PC-9 (cell line): ENCODE measurements at regions of chr10 and their contacts with region 1.

Region 1: DNA sequence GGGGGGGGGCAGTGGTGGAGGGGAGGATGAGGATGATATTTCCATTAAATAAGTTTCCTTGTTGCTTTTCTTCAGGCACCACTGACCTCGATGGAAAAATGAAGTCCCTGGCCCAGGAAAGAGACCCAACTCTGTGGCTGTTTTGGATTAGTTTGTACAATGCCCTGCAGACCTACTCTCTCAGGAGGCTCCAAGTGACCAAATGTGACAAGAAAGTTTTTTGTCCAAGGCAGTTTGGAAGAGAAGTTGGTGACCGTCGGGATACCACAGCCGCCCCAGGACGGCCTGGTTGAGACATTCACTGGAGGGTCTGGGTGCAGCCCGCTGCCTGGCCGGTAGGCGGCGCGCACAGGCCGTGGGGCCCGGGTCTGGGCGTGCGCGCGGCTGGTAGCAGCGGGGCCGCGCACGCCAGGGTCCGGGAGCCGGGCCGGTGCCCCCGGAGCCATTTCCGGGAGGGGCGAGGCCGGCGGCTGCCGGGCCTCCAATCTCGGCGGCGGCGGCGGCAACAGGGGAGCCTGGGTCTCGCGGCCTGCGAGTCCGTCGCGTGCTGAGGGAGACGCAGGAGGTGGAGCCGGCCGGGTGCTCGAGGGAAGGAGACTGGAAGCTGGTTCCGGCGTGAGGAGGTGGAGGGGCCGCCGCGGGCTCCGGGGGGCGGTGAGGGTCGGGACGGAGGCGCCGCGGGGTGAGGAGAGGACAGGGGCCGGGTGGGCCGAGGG is at the start of gene SGPL1:
- DNase-seq: peak; percentile 68 to 91
- H3K4me3 ChIP-seq: peak within 1 kb of the TSS; percentile 68
- H3K27ac ChIP-seq: peak within 1 kb of the TSS; percentile 89
- H3K4me1 ChIP-seq: peaks cover 45% of the 10 kb centered on the region
- H3K27me3 ChIP-seq: no peaks in the 10 kb centered on the region
- CTCF ChIP-seq: peak; percentile 84
- total RNA-seq, gene SGPL1: 96.9 and 141 TPM in 2 replicates

Region 2: GRCh38 chr10:70461215-70461986 is 354.3 kb before region 1 on chr10:
- CTCF ChIA-PET with region 1: interaction called, 3 read pairs
- POLR2A ChIA-PET with region 1: no interaction called
- intact Hi-C with region 1: loop called (anchors 5 kb)
- DNase-seq: peak in 1 of 2 experiments; percentile 64
- H3K4me3 ChIP-seq: no peak overlapping the region
- H3K27ac ChIP-seq: no peak overlapping the region
- H3K4me1 ChIP-seq: peaks cover 14% of the 10 kb centered on the region; the same call in 1 of the 2 replicates
- H3K27me3 ChIP-seq: peaks cover 17% of the 10 kb centered on the region; the same call in 1 of the 2 replicates
- CTCF ChIP-seq: peak; percentile 95

Region 3: GRCh38 chr10:70722820-70723424 is 92.7 kb before region 1 on chr10:
- CTCF ChIA-PET with region 1: no interaction called
- POLR2A ChIA-PET with region 1: no interaction called
- intact Hi-C with region 1: no loop called
- DNase-seq: peak; percentile 40 to 93
- H3K4me3 ChIP-seq: no peak overlapping the region
- H3K27ac ChIP-seq: peak overlapping the region; percentile 80
- H3K4me1 ChIP-seq: peaks cover 26% of the 10 kb centered on the region
- H3K27me3 ChIP-seq: no peaks in the 10 kb centered on the region
- CTCF ChIP-seq: no peak

Region 4: GRCh38 chr10:70866424-70866823 is 50.8 kb after region 1 on chr10:
- CTCF ChIA-PET with region 1: no interaction called
- POLR2A ChIA-PET with region 1: no interaction called
- intact Hi-C with region 1: loop called (anchors 1 kb)
- DNase-seq: peak; percentile 69 to 96
- H3K4me3 ChIP-seq: peak overlapping the region; percentile 39; the same call in 1 of the 2 replicates
- H3K27ac ChIP-seq: peak overlapping the region; percentile 88
- H3K4me1 ChIP-seq: peaks cover 48% of the 10 kb centered on the region
- H3K27me3 ChIP-seq: no peaks in the 10 kb centered on the region
- CTCF ChIP-seq: no peak

Region 5: DNA sequence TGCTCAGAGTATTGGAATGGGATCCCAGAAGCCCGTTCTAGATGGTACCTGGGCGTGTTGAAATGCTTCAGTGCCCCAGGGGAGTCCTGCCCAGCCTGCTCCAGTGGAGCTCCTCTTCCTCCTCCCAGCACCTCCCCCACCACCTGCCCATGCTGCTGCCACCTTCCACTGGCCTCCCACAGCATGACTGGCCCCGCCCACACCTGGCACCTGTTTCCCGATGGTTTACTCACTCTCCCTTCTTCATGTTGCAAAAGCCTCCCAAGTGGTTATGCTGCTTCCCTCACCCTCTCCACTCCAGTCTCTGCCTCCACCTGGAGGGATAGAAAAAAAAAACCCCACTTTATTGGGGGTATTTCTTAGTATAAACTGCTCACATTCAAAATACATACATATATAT is 104.9 kb after region 1 on chr10:
- CTCF ChIA-PET with region 1: no interaction called
- POLR2A ChIA-PET with region 1: no interaction called
- intact Hi-C with region 1: loop called (anchors 1 kb)
- DNase-seq: peak; percentile 87 to 93
- H3K4me3 ChIP-seq: no peak overlapping the region
- H3K27ac ChIP-seq: no peak overlapping the region
- H3K4me1 ChIP-seq: peaks cover 27% of the 10 kb centered on the region
- H3K27me3 ChIP-seq: peaks cover 27% of the 10 kb centered on the region
- CTCF ChIP-seq: 0 out of 2 replicates have a peak, but pooled peaks have one; percentile 20

Region 6: DNA sequence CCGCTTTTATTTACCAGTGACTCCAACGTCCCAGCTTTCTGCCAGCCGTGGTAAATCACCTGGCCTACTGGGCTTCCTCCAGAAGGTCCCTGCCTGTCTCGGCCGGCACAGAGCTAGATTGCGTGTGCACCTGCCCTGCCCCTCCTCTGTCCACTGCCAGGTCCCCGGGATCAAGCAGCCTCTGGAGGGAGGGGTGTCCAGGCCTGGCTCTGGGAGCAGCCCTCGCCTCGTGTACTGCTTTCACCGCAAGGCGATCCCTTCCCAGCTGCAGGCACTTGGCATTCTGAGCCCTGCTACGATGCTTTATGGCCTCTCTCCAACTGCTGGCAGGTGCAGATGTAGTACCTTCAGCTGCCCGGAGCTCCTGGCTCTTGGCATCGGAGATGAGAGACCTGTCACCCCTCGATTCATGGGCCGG is 510.8 kb after region 1 on chr10:
- CTCF ChIA-PET with region 1: no interaction called
- POLR2A ChIA-PET with region 1: no interaction called
- intact Hi-C with region 1: no loop called
- DNase-seq: no peak
- H3K4me3 ChIP-seq: no peak overlapping the region
- H3K27ac ChIP-seq: no peak overlapping the region
- H3K4me1 ChIP-seq: 0 out of 2 replicates have a peak, but pooled peaks cover 3% of the 10 kb centered on the region
- H3K27me3 ChIP-seq: no peaks in the 10 kb centered on the region
- CTCF ChIP-seq: no peak

Region 7: GRCh38 chr10:71659111-71659634 is 843.5 kb after region 1 on chr10:
- CTCF ChIA-PET with region 1: interaction called, 14 read pairs
- POLR2A ChIA-PET with region 1: no interaction called
- intact Hi-C with region 1: no loop called
- DNase-seq: no peak
- H3K4me3 ChIP-seq: no peak overlapping the region
- H3K27ac ChIP-seq: no peak overlapping the region
- H3K4me1 ChIP-seq: no peaks in the 10 kb centered on the region
- H3K27me3 ChIP-seq: no peaks in the 10 kb centered on the region
- CTCF ChIP-seq: no peak

Region 8: DNA sequence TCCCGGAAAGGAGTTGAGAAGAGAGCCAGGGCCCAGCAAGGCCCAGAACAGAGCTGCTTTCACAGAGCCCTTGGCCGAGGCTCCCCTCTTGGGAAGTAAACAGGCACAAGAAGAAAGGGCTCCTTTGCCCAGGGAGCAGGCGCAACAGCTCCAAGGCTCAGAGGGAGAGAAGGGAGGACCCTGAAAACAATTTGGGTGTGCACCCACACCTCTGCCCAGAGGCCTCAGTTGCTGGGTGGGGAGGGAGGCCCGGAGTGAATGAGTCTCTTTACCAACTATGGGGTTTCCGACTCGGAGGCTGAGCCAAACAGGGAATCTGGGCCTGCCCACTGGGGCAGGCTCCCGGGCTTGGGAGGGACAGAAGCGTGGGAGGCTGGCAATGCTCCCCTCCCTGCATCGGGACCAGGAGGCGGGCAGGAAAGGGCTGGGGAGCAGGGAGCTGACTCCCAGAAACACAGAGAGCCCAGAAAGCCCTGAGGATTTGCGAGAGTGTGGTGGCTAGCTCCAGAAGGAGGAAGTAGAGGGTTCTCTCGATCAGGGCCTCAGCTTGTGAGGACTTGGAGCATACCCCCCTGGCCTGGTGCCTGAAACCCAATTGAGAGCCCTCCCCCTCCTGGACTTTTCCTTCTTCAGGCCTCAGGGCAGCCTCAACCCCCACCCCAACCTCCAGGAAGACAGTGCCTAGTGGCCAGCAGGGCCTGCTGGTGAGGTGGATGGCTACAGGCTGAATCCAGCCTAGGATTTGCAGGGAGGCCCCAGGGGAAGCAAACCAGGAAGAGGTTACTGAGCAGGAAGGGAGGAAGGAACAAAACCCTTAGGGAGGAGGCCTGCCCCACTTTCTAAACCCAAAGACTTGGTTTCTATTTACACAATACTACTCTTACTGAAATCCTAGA is 897.7 kb after region 1 on chr10:
- CTCF ChIA-PET with region 1: no interaction called
- POLR2A ChIA-PET with region 1: no interaction called
- intact Hi-C with region 1: no loop called
- DNase-seq: peak; percentile 66 to 77
- H3K4me3 ChIP-seq: no peak overlapping the region
- H3K27ac ChIP-seq: peak overlapping the region; percentile 50
- H3K4me1 ChIP-seq: peaks cover 20% of the 10 kb centered on the region
- H3K27me3 ChIP-seq: no peaks in the 10 kb centered on the region
- CTCF ChIP-seq: no peak; the same call in 1 of the 2 replicates